ENCODE measurements at regions of chr4 and their contacts with region 1.

Region 1: DNA sequence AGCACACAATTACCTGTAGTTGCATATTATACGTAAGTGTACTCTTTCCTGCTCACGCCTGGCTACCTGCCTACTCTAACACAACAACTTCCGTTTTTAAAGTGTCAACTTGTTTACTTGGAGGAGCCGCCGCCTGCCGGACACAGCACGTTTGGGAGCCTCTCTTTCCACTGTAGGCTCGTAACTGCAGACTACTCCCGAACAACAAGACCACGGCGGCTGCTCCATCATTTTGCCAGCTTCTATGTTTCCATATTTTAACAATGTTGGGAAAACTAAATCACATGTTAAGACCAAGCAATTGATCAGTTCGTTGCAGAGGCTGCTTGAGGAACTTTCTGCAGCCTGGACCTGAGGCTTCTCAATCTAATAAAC is 841 bp downstream of the MTNR1A start:
- DNase-seq: peak; percentile 68
- H3K4me3 ChIP-seq: peak overlapping the region; percentile 61
- H3K27ac ChIP-seq: no peak overlapping the region
- H3K4me1 ChIP-seq: peaks cover 6% of the 10 kb centered on the region
- H3K27me3 ChIP-seq: peaks cover 5% of the 10 kb centered on the region
- CTCF ChIP-seq: peak; percentile 52

Region 2: DNA sequence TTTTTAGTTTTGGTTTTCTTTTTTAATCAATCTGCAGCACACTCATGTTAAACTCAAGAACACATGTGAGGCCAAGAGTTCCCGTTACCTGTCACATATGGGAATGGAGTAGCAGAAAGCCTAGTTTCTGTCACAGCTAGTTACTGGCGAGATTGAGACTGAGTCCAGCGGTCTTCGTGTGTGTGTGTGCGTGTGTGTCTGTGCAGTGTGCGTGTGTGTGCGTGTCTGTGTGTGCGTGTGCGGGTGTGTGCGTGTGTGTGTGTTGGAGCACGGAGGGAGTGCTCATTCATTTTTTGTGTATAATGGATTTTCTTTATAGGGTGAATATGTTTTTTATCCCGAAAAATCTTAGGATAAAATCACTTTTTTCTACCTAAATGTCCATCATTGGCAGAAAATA is 269.4 kb before region 1 on chr4:
- CTCF ChIA-PET with region 1: no interaction called
- POLR2A ChIA-PET with region 1: no interaction called
- intact Hi-C with region 1: no loop called
- DNase-seq: no peak
- H3K4me3 ChIP-seq: no peak overlapping the region
- H3K27ac ChIP-seq: no peak overlapping the region
- H3K4me1 ChIP-seq: no peaks in the 10 kb centered on the region
- H3K27me3 ChIP-seq: no peaks in the 10 kb centered on the region
- CTCF ChIP-seq: no peak

Region 3: DNA sequence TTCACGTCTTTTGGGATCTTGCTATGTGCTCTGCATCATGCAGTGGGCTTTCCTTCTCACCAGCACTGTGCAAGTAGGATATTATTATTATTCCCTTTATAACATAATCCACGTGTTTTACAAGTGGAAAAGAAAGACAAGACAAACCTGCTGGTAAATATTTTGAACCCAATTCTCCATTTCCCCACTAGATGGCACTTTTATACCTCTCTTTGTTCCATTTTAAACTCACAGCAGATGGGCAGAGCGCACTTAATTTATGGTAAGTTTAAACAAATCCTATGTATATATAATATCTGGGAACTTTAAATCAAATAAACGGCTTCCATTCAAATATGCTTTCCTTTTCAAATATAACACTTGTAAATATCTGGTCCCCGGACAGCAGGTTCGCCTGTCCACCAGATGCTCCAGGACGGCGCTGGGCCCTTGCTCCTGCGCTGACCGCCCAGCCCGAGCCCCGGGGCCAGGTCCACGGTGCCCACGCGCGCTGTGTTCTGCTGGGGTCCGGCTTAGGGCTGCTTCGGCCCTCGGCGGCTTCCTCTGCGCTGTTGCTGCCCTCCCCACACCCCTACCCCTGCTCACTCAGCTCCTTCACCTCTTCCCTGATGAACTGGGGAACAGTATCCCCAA is 257.4 kb before region 1 on chr4:
- CTCF ChIA-PET with region 1: no interaction called
- POLR2A ChIA-PET with region 1: no interaction called
- intact Hi-C with region 1: loop called (anchors 1 kb)
- DNase-seq: peak; percentile 79
- H3K4me3 ChIP-seq: no peak overlapping the region
- H3K27ac ChIP-seq: no peak overlapping the region
- H3K4me1 ChIP-seq: no peaks in the 10 kb centered on the region
- H3K27me3 ChIP-seq: no peaks in the 10 kb centered on the region
- CTCF ChIP-seq: peak; percentile 74

Region 4: GRCh38 chr4:186472948-186473347 is 81.6 kb before region 1 on chr4:
- CTCF ChIA-PET with region 1: no interaction called
- POLR2A ChIA-PET with region 1: no interaction called
- intact Hi-C with region 1: loop called (anchors 5 kb)
- DNase-seq: peak; percentile 58
- H3K4me3 ChIP-seq: no peak overlapping the region
- H3K27ac ChIP-seq: no peak overlapping the region
- H3K4me1 ChIP-seq: no peaks in the 10 kb centered on the region
- H3K27me3 ChIP-seq: no peaks in the 10 kb centered on the region
- CTCF ChIP-seq: peak; percentile 85